CD14-positive monocyte (primary cell): ENCODE measurements at regions of chr10 and their contacts with region 1.

Region 1: GRCh38 chr10:13913897-13914296 is 327.1 kb downstream of the PRPF18 start:
- DNase-seq: peak; percentile 13 to 35 (median 29)
- H3K4me3 ChIP-seq: no peak overlapping the region
- H3K4me3 Mint-ChIP-seq: no peak overlapping the region
- H3K27ac ChIP-seq: peak overlapping the region in 1 of 2 donors; percentile 17
- H3K27ac Mint-ChIP-seq: peak overlapping the region in 4 of 7 donors; percentile 33 to 77 (median 65)
- H3K4me1 ChIP-seq: peaks cover 41 to 46% of the 10 kb centered on the region in 2 donors
- H3K4me1 Mint-ChIP-seq: peaks cover 52% of the 10 kb centered on the region
- H3K27me3 ChIP-seq: peaks cover 0 to 2% of the 10 kb centered on the region in 2 donors
- H3K27me3 Mint-ChIP-seq: peaks cover 0 to 12% (median 4%) of the 10 kb centered on the region in 3 donors
- CTCF ChIP-seq: no peak

Region 2: DNA sequence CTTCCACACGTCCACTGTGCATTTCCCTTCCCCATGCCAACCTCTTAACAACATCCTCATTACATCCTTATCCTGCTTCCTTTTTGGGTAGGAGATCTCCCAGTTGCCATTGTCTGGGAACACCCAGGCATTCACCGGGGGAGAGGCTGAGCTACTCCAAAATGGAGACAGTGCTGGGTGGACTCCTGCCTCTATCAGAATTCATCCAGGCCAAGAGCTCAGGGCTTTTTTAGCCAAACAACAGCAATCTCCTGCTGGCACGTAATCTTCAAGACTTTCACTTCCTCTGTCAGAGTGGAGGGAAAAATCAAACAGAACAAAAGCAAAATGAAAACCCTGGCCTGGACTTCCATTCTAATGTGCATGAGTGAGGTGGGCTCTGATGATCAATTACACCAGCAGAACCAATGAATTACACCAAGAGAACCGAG is 82.2 kb before region 1 on chr10:
- intact Hi-C with region 1: loop called in 1 of 2 experiments (anchors 10 kb)
- DNase-seq: peak; percentile 44 to 62 (median 55)
- H3K4me3 ChIP-seq: peak overlapping the region in 1 of 3 experiments; percentile 50
- H3K4me3 Mint-ChIP-seq: peak overlapping the region in 1 of 2 donors; percentile 87
- H3K27ac ChIP-seq: peak overlapping the region in 1 of 2 donors; percentile 78
- H3K27ac Mint-ChIP-seq: peak overlapping the region; percentile 82 to 96 (median 94)
- H3K4me1 ChIP-seq: peaks cover 14 to 19% of the 10 kb centered on the region in 2 donors
- H3K4me1 Mint-ChIP-seq: peaks cover 30% of the 10 kb centered on the region
- H3K27me3 ChIP-seq: no peaks in the 10 kb centered on the region
- H3K27me3 Mint-ChIP-seq: peaks cover 7 to 17% (median 13%) of the 10 kb centered on the region in 3 donors
- CTCF ChIP-seq: no peak

Region 3: GRCh38 chr10:13873196-13873595 is 40.7 kb before region 1 on chr10:
- intact Hi-C with region 1: loop called in 1 of 2 experiments (anchors 5 kb)
- DNase-seq: peak; percentile 40 to 78 (median 66)
- H3K4me3 ChIP-seq: peak overlapping the region in 1 of 3 experiments; percentile 34
- H3K4me3 Mint-ChIP-seq: peak overlapping the region in 1 of 2 donors; percentile 39
- H3K27ac ChIP-seq: peak overlapping the region; percentile 85 to 87
- H3K27ac Mint-ChIP-seq: peak overlapping the region; percentile 85 to 97 (median 95)
- H3K4me1 ChIP-seq: peaks cover 43 to 46% of the 10 kb centered on the region in 2 donors
- H3K4me1 Mint-ChIP-seq: peaks cover 48% of the 10 kb centered on the region
- H3K27me3 ChIP-seq: no peaks in the 10 kb centered on the region
- H3K27me3 Mint-ChIP-seq: peaks cover 1 to 11% (median 3%) of the 10 kb centered on the region in 3 donors
- CTCF ChIP-seq: no peak